ENCODE measurements at regions of chr15 and their contacts with region 1.

Region 1: DNA sequence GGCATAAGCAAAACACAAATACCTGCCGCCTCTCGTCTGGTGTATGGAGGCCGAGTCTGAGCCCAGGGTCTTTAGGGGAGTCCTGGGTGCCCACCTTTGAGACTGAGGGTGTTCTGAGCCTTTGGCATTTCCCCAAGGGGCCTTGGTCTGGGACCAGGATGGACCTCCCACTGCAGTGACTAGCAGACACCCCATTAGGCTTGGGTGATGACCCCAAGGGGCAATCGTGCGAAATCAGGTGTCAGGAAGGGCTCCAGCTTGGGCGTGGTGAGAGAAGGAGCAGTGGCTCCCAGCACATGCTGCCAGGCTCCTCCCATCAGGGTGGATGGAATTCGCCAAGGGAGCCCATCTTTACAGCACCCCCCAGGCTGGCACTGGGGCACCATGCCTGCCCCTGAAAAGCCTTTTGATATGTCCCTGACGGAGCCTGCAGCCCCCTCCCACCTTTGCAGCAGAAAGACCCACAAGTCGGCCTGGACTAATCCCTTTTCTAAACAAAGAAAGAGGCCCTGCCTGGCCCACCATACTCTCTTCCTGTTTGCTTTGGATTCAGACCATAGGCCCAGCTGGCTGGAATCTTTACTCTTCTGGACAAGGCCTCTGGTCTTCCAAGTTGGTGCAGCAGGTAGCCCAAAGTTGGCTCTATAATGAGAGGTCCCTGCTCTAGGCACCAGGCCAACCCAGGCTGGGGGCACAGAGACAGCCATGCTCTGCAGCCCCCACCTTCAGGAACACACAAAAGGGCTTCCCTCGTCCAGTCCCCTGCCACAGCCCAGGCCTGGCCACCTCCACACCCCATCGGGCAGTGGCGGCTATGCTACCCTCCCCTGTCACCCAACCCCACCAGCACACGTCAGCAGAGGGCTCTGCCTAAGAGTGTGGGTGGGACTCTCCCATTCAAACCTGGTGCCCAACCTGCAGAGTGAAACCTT is 5.5 kb downstream of the ANPEP start:
- DNase-seq: peak in 4 of 6 donors; percentile 64 to 67 (median 65)
- ATAC-seq: peak; percentile 18 to 25 (median 20)
- H3K4me3 ChIP-seq: no peak overlapping the region
- H3K27ac ChIP-seq: peak overlapping the region; percentile 30 to 52 (median 51)
- H3K4me1 ChIP-seq: peaks cover 29 to 38% (median 30%) of the 10 kb centered on the region in 3 donors
- H3K27me3 ChIP-seq: no peaks in the 10 kb centered on the region
- CTCF ChIP-seq: no peak

Region 2: GRCh38 chr15:89751748-89752147 is 57.4 kb before region 1 on chr15:
- intact Hi-C with region 1: no loop called
- DNase-seq: peak; percentile 83 to 96 (median 92)
- ATAC-seq: peak; percentile 64 to 70 (median 69)
- H3K4me3 ChIP-seq: peak overlapping the region in 2 of 4 donors; percentile 57 to 67
- H3K27ac ChIP-seq: peak overlapping the region; percentile 64 to 80 (median 72)
- H3K4me1 ChIP-seq: peaks cover 9 to 13% (median 11%) of the 10 kb centered on the region in 3 donors
- H3K27me3 ChIP-seq: no peaks in the 10 kb centered on the region
- CTCF ChIP-seq: no peak

Region 3: GRCh38 chr15:89768060-89768500 is 41.0 kb before region 1 on chr15:
- intact Hi-C with region 1: loop called in 1 of 3 experiments (anchors 5 kb)
- DNase-seq: peak in 5 of 6 donors; percentile 76 to 92 (median 89)
- ATAC-seq: peak; percentile 60 to 81 (median 76)
- H3K4me3 ChIP-seq: no peak overlapping the region
- H3K27ac ChIP-seq: peak overlapping the region; percentile 82 to 99 (median 94)
- H3K4me1 ChIP-seq: peaks cover 35 to 46% (median 36%) of the 10 kb centered on the region in 3 donors
- H3K27me3 ChIP-seq: no peaks in the 10 kb centered on the region
- CTCF ChIP-seq: no peak

Region 4: DNA sequence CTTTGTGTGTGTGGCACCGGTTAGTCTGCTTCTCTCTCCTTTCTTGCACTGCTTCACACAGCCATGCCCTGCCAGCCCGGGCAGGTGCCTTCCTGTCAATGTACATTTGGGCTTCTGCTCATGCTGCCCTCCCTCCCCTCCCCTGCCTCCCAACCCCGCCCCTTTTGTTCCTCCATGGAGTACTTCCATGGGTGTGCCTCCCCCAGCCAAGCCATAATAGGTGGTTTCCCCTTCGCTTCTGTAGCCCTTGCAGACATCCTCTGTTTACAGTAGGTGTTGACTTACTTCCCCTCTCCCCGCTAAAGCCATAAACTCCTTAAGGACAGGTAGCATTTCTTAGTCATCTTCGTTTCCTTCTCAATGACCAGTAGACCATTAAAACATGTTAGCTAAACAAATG is 688.8 kb after region 1 on chr15:
- intact Hi-C with region 1: no loop called
- DNase-seq: no peak
- ATAC-seq: peak in 1 of 4 donors; percentile 12
- H3K4me3 ChIP-seq: no peak overlapping the region
- H3K27ac ChIP-seq: no peak overlapping the region
- H3K4me1 ChIP-seq: no peaks in the 10 kb centered on the region
- H3K27me3 ChIP-seq: no peaks in the 10 kb centered on the region
- CTCF ChIP-seq: no peak